Dorsolateral prefrontal cortex (tissue), 120 donors: ENCODE measurements at regions of chr2 and their contacts with region 1.

Region 1: GRCh38 chr2:98768384-98769113 is 37.6 kb upstream of the MGAT4A start:
- DNase-seq: peak in 1 of 10 donors; percentile 41
- H3K4me3 ChIP-seq: peak overlapping the region in 10 of 59 donors; percentile 2 to 32 (median 22)
- H3K27ac ChIP-seq: peak overlapping the region in 34 of 59 donors; percentile 8 to 86 (median 46)
- H3K27me3 ChIP-seq: no peaks in the 10 kb centered on the region
- CTCF ChIP-seq: no peak

Region 2: GRCh38 chr2:98822301-98823164 is 54.0 kb after region 1 on chr2:
- intact Hi-C with region 1: loop called in 1 of 2 experiments (anchors 5 kb)
- DNase-seq: peak in 1 of 10 donors; percentile 52
- H3K4me3 ChIP-seq: peak overlapping the region; percentile 36 to 74 (median 57)
- H3K27ac ChIP-seq: peak overlapping the region in 57 of 59 donors; percentile 11 to 87 (median 74)
- H3K27me3 ChIP-seq: peaks cover 0 to 3% (median 0%) of the 10 kb centered on the region in 45 donors
- CTCF ChIP-seq: peak in 43 of 56 donors; percentile 8 to 51 (median 29)